ENCODE measurements at regions of chr1 and their contacts with region 1.

Region 1: DNA sequence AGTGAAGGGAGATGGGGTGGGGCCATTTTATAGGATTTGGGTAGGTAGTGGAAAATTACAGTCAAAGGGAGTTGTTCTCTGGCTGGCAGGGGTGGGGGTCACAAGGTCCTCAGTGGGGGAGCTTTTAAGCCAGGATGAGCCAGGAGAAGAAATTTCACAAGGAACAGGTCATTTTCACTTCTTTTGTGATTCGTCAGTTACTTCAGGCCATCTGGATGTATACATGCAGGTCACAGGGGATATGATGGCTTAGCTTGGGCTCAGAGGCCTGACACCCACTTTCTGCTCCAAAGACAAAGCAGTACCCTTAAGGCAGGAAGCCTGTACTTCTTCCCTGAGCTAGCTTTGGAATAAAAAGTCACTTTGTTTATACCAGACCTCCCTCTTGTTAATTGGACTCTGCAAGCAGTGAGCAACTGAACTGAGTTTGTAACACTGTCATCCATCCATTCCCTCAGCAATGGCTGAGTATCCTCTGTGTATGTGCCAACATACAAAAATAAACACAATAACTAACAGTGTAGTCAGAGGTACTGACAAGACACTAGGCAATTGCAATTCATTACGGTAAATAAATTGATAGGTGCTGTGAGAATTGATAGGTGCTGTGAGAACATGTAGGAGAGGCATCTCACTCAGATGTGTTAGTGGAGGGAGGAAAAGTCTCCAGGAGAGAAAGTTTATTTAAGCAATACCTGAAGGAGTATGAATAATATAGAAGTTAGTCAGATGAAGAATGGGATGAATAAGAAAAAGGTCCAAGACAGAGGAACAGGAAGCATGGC is 14.7 kb upstream of the RGS2 start:
- DNase-seq: no peak
- ATAC-seq: peak in 3 of 4 donors; percentile 28 to 62 (median 29)
- H3K4me3 ChIP-seq: no peak overlapping the region
- H3K27ac ChIP-seq: peak overlapping the region in 1 of 12 donors; percentile 39
- H3K4me1 ChIP-seq: peaks cover 0 to 8% (median 0%) of the 10 kb centered on the region in 12 donors
- H3K27me3 ChIP-seq: no peaks in the 10 kb centered on the region
- CTCF ChIP-seq: no peak
- POLR2A ChIP-seq: no peak

Region 2: GRCh38 chr1:192639607-192640368 is 154.4 kb before region 1 on chr1:
- intact Hi-C with region 1: loop called in 1 of 10 experiments (anchors 10 kb)
- DNase-seq: no peak
- ATAC-seq: no peak
- H3K4me3 ChIP-seq: no peak overlapping the region
- H3K27ac ChIP-seq: no peak overlapping the region
- H3K4me1 ChIP-seq: peaks cover 0 to 8% (median 0%) of the 10 kb centered on the region in 12 donors
- H3K27me3 ChIP-seq: no peaks in the 10 kb centered on the region
- CTCF ChIP-seq: no peak
- POLR2A ChIP-seq: no peak

Region 3: DNA sequence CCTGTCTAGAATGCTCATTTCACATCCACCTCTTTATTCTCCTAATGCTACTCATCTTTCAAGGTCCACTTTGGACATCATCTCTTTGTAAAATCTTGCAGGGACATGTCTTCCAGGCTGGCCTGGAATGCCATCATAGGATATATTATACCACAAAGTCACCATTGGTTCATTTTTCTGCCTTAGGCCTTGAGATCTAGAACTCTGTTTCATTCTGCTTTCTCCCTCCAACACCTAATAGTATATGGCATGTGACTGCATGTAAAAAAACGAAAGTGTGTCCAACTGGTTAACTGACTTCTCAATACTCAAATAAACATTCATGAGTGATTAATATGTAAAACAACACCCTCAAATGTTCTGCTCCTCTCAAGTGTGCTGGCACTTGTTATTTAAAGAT is 98.8 kb after region 1 on chr1:
- intact Hi-C with region 1: no loop called
- DNase-seq: no peak
- ATAC-seq: no peak
- H3K4me3 ChIP-seq: no peak overlapping the region
- H3K27ac ChIP-seq: peak overlapping the region in 1 of 12 donors; percentile 40
- H3K4me1 ChIP-seq: no peaks in the 10 kb centered on the region
- H3K27me3 ChIP-seq: no peaks in the 10 kb centered on the region
- CTCF ChIP-seq: no peak
- POLR2A ChIP-seq: no peak